ENCODE measurements at regions of chr14 and their contacts with region 1.

Region 1: GRCh38 chr14:68458840-68459469 is 333.9 kb downstream of the ZFP36L1 start:
- DNase-seq: peak; percentile 98
- H3K4me3 ChIP-seq: no peak overlapping the region
- H3K27ac ChIP-seq: peak overlapping the region; percentile 85
- H3K4me1 ChIP-seq: peaks cover 30% of the 10 kb centered on the region
- H3K27me3 ChIP-seq: no peaks in the 10 kb centered on the region
- CTCF ChIP-seq: no peak
- POLR2A ChIP-seq: peak; percentile 23

Region 2: DNA sequence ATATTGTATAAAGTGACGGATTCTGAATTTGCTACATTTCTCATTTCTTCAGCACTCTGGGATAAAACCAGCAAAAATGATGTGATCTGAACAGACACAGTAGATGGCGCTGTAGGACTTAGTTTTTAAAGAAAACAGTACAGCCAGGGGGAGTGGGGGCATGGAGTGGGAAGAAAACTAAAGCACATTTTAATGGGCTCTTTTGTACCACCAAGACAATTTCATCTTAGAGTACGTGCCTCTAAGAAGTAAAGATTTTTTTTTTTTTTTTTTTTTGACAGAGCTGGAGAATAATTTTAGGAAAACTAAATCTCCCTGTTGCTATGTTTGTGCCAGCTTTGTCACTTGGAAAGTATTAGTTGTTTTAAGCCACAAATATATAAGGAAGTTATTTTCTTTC is 515.0 kb before region 1 on chr14:
- CTCF ChIA-PET with region 1: interaction called, 3 read pairs
- POLR2A ChIA-PET with region 1: no interaction called
- dilution Hi-C with region 1: no loop called
- intact Hi-C with region 1: loop called (anchors 5 kb)
- DNase-seq: peak; percentile 85
- H3K4me3 ChIP-seq: no peak overlapping the region
- H3K27ac ChIP-seq: no peak overlapping the region
- H3K4me1 ChIP-seq: peaks cover 6% of the 10 kb centered on the region
- H3K27me3 ChIP-seq: no peaks in the 10 kb centered on the region
- CTCF ChIP-seq: peak; percentile 37 to 61
- POLR2A ChIP-seq: no peak

Region 3: GRCh38 chr14:68495101-68496039 is 36.4 kb after region 1 on chr14:
- CTCF ChIA-PET with region 1: interaction called, 4 read pairs
- POLR2A ChIA-PET with region 1: interaction called, 3 read pairs
- dilution Hi-C with region 1: no loop called
- intact Hi-C with region 1: loop called (anchors 1 kb)
- DNase-seq: peak; percentile 81
- H3K4me3 ChIP-seq: no peak overlapping the region
- H3K27ac ChIP-seq: peak overlapping the region; percentile 0
- H3K4me1 ChIP-seq: peaks cover 23% of the 10 kb centered on the region
- H3K27me3 ChIP-seq: no peaks in the 10 kb centered on the region
- CTCF ChIP-seq: no peak
- POLR2A ChIP-seq: no peak

Region 4: GRCh38 chr14:68577827-68578541 is 119.0 kb after region 1 on chr14:
- CTCF ChIA-PET with region 1: no interaction called
- POLR2A ChIA-PET with region 1: no interaction called
- dilution Hi-C with region 1: no loop called
- intact Hi-C with region 1: loop called (anchors 1 kb)
- DNase-seq: peak; percentile 94
- H3K4me3 ChIP-seq: no peak overlapping the region
- H3K27ac ChIP-seq: peak overlapping the region; percentile 77
- H3K4me1 ChIP-seq: peaks cover 40% of the 10 kb centered on the region
- H3K27me3 ChIP-seq: no peaks in the 10 kb centered on the region
- CTCF ChIP-seq: no peak
- POLR2A ChIP-seq: peak; percentile 77

Region 5: GRCh38 chr14:68685419-68686204 is 226.7 kb after region 1 on chr14:
- CTCF ChIA-PET with region 1: interaction called, 3 read pairs
- POLR2A ChIA-PET with region 1: interaction called, 3 read pairs
- dilution Hi-C with region 1: no loop called
- intact Hi-C with region 1: loop called (anchors 1 kb)
- DNase-seq: no peak
- H3K4me3 ChIP-seq: no peak overlapping the region
- H3K27ac ChIP-seq: no peak overlapping the region
- H3K4me1 ChIP-seq: peaks cover 43% of the 10 kb centered on the region
- H3K27me3 ChIP-seq: no peaks in the 10 kb centered on the region
- CTCF ChIP-seq: no peak
- POLR2A ChIP-seq: no peak

Region 6: GRCh38 chr14:68727315-68728047 is 268.5 kb after region 1 on chr14:
- CTCF ChIA-PET with region 1: no interaction called
- POLR2A ChIA-PET with region 1: no interaction called
- dilution Hi-C with region 1: no loop called
- intact Hi-C with region 1: loop called (anchors 1 kb)
- DNase-seq: peak; percentile 62
- H3K4me3 ChIP-seq: no peak overlapping the region
- H3K27ac ChIP-seq: no peak overlapping the region
- H3K4me1 ChIP-seq: peaks cover 17% of the 10 kb centered on the region
- H3K27me3 ChIP-seq: no peaks in the 10 kb centered on the region
- CTCF ChIP-seq: no peak
- POLR2A ChIP-seq: no peak